ENCODE measurements at regions of chr1 and their contacts with region 1.

Region 1: GRCh38 chr1:151888972-151889570 is 20.2 kb downstream of the THEM4 start:
- DNase-seq: no peak
- H3K4me3 Mint-ChIP-seq: no peak overlapping the region
- H3K27ac Mint-ChIP-seq: no peak overlapping the region
- H3K4me1 Mint-ChIP-seq: peaks cover 27% of the 10 kb centered on the region
- H3K27me3 Mint-ChIP-seq: no peaks in the 10 kb centered on the region

Region 2: DNA sequence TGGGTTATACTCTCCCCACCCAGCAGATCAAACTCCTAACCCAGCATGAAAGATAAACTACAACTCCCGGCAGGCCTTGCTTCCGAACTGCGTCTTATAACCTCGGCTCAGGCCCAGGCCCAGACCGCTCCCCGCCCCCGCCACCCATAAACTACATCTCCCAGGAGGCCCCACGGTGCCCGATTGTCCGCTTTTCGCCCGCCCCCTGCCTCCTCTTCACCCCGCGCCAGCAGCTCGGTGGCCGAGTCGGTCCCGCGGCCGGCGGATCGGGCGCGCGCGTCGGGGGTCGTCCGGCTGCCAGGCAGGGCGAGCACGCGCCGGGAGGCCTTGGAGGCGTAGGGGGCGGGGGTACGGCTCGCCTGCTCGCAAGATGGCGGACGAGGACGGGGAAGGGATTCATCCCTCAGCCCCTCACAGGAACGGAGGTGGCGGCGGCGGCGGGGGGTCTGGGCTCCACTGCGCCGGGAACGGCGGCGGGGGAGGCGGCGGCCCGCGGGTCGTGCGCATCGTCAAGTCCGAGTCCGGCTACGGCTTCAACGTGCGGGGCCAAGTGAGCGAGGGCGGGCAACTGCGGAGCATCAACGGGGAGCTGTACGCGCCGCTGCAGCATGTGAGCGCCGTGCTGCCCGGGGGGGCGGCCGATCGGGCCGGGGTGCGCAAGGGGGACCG is 277.1 kb before region 1 on chr1 and contains the start of gene SNX27:
- CTCF ChIA-PET with region 1: no interaction called
- POLR2A ChIA-PET with region 1: no interaction called
- intact Hi-C with region 1: no loop called
- DNase-seq: peak; percentile 93
- H3K4me3 Mint-ChIP-seq: peak within 1 kb of the TSS; percentile 94
- H3K27ac Mint-ChIP-seq: peak within 1 kb of the TSS; percentile 79
- H3K4me1 Mint-ChIP-seq: peaks cover 49% of the 10 kb centered on the region
- H3K27me3 Mint-ChIP-seq: peaks cover 1% of the 10 kb centered on the region
- total RNA-seq, gene SNX27: 27.1 to 30.7 TPM

Region 3: GRCh38 chr1:151661751-151662150 is 227.3 kb before region 1 on chr1:
- CTCF ChIA-PET with region 1: no interaction called
- POLR2A ChIA-PET with region 1: no interaction called
- intact Hi-C with region 1: no loop called
- DNase-seq: no peak
- H3K4me3 Mint-ChIP-seq: no peak overlapping the region
- H3K27ac Mint-ChIP-seq: peak overlapping the region; percentile 4
- H3K4me1 Mint-ChIP-seq: peaks cover 6% of the 10 kb centered on the region
- H3K27me3 Mint-ChIP-seq: no peaks in the 10 kb centered on the region

Region 4: DNA sequence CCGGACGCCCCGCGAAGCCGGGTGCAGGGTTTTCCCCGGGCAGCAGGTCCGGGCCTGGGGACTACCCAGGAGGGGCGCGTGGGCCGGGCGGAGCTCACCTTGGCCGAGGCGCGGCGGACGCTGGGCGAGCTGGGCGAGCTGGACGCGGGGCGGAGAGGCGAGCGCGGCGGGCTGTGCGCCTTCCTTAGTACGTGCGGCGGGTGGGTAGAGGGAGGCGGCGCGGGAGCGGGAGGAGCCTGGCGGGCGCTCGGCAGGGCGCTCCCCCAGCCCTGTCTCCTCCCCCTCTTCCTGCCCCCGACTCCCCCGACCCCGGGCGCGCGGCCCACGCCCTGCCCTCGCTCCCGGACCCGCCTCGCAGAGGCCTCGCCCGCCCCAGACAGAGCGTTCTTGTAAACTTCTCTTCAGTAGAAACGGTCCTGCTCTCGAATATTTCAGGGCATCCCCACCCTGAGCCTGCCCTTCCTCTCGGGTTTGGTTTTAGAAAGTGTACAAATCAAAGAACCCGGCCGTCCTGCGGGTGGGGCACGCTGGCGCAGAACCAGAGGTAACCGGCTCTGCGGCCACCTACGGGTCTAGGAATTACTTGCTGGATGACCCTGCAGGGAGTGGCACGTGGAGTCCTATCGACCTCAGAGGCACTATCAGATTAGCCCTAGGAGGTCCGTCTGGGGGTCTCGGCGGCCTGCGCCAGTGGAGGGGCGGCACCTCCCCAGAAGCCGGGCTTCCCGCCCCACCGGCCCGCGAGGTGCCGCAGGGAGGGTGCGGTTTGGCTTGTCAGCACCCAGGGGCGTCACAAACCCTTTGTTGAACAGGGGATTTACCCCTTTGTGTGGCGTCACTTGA is 104.8 kb after region 1 on chr1 and contains the start of gene S100A10:
- CTCF ChIA-PET with region 1: interaction called, 8 read pairs
- POLR2A ChIA-PET with region 1: no interaction called
- intact Hi-C with region 1: loop called (anchors 1 kb)
- DNase-seq: peak; percentile 83
- H3K4me3 Mint-ChIP-seq: peak within 1 kb of the TSS; percentile 94
- H3K27ac Mint-ChIP-seq: peak within 1 kb of the TSS; percentile 90
- H3K4me1 Mint-ChIP-seq: peaks cover 47% of the 10 kb centered on the region
- H3K27me3 Mint-ChIP-seq: no peaks in the 10 kb centered on the region
- total RNA-seq, gene S100A10: 257 to 270 TPM